ENCODE measurements at regions of chr2 and their contacts with region 1.

Region 1: GRCh38 chr2:25690058-25690457 is 16.7 kb upstream of the DTNB start:
- DNase-seq: peak; percentile 43 to 72
- H3K4me3 ChIP-seq: no peak overlapping the region
- H3K27ac ChIP-seq: no peak overlapping the region
- H3K4me1 ChIP-seq: peaks cover 12% of the 10 kb centered on the region
- H3K27me3 ChIP-seq: no peaks in the 10 kb centered on the region
- CTCF ChIP-seq: no peak

Region 2: DNA sequence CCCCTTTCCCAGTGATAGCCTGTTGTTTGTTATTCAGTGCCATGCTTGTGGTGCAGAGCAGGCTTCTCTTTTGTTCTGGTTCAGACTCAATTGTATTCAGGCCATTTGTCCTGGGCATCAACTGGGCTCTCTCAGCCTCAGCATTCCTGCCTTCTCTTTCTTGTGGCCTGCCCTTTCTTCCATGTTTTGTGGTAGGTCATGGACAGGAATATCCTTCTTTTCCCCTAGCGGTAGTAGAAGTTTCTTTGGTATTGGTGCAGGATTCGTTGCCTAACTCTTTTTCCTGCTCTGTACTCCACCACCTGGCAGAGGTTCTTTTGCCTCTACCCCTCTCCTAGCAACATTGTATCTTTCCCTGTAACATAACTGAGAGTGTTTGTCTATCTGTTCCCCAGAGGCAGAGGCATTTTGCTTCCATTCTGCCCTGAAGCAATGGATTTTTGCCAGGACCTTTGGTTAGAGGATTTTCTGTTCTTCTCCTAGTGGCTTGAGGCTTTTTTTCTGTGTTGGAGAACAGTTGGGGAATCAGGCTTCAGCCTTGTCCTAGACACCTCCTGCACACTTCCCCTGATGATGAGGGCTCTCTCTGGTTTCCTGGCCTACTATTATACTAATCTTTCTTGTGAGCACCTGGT is 1130.5 kb before region 1 on chr2:
- CTCF ChIA-PET with region 1: no interaction called
- POLR2A ChIA-PET with region 1: interaction called, 22 read pairs
- intact Hi-C with region 1: no loop called
- DNase-seq: no peak
- H3K4me3 ChIP-seq: no peak overlapping the region
- H3K27ac ChIP-seq: no peak overlapping the region
- H3K4me1 ChIP-seq: no peaks in the 10 kb centered on the region
- H3K27me3 ChIP-seq: no peaks in the 10 kb centered on the region
- CTCF ChIP-seq: no peak

Region 3: DNA sequence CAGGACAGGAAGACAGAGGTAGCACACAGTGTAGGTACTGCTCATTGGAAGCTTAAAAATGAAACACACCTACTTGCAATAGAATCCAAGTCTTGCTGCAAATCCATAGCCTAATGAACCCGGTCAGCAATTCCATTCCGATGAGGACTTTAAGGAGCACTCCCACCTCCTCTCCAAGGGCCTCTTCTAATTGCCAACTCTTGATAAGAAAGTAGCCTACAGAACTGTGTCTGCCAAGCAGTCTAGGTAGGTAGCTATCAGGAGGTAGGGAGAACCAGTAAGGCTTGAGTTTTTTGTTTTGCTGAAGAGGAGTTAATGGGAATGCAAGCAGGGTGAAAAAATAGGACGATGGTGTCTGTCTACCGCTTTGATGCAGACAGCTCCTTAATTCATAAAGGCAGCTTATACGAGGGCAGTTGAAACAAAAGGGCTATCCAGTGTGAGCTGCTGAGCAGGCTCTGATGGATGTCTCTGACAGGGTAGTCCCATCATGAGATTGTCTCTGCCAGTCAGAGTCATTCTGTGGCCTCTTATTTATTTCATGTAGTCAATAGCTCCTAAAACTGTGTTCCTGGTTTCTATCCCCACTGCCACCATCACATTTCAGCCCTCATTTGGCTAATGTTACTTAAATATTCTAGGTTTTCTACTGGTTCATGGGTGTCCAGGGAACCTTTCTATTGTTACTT is 192.7 kb before region 1 on chr2:
- CTCF ChIA-PET with region 1: no interaction called
- POLR2A ChIA-PET with region 1: interaction called, 14 read pairs
- intact Hi-C with region 1: no loop called
- DNase-seq: no peak
- H3K4me3 ChIP-seq: no peak overlapping the region
- H3K27ac ChIP-seq: no peak overlapping the region
- H3K4me1 ChIP-seq: peaks cover 7% of the 10 kb centered on the region
- H3K27me3 ChIP-seq: no peaks in the 10 kb centered on the region
- CTCF ChIP-seq: no peak

Region 4: GRCh38 chr2:25673300-25674076 is 16.6 kb before region 1 on chr2 and contains the start of gene DTNB:
- CTCF ChIA-PET with region 1: no interaction called
- POLR2A ChIA-PET with region 1: no interaction called
- intact Hi-C with region 1: loop called (anchors 2 kb)
- DNase-seq: peak; percentile 92 to 93
- H3K4me3 ChIP-seq: peak within 1 kb of the TSS; percentile 61
- H3K27ac ChIP-seq: peak within 1 kb of the TSS; percentile 48
- H3K4me1 ChIP-seq: peaks cover 33% of the 10 kb centered on the region
- H3K27me3 ChIP-seq: no peaks in the 10 kb centered on the region
- CTCF ChIP-seq: no peak
- total RNA-seq, gene DTNB: 51.9 TPM in 2 replicates

Region 5: GRCh38 chr2:25700221-25700660 is 10.2 kb after region 1 on chr2:
- CTCF ChIA-PET with region 1: interaction called, 5 read pairs
- POLR2A ChIA-PET with region 1: interaction called, 11 read pairs
- intact Hi-C with region 1: no loop called
- DNase-seq: peak; percentile 25 to 94
- H3K4me3 ChIP-seq: no peak overlapping the region
- H3K27ac ChIP-seq: no peak overlapping the region
- H3K4me1 ChIP-seq: peaks cover 34% of the 10 kb centered on the region
- H3K27me3 ChIP-seq: no peaks in the 10 kb centered on the region
- CTCF ChIP-seq: peak; percentile 88

Region 6: GRCh38 chr2:26345545-26346453 is 655.7 kb after region 1 on chr2 and contains the start of gene SELENOI:
- CTCF ChIA-PET with region 1: no interaction called
- POLR2A ChIA-PET with region 1: no interaction called
- intact Hi-C with region 1: no loop called
- DNase-seq: peak; percentile 98 to 99
- H3K4me3 ChIP-seq: peak within 1 kb of the TSS; percentile 85
- H3K27ac ChIP-seq: peak within 1 kb of the TSS; percentile 84
- H3K4me1 ChIP-seq: peaks cover 42% of the 10 kb centered on the region
- H3K27me3 ChIP-seq: no peaks in the 10 kb centered on the region
- CTCF ChIP-seq: no peak
- total RNA-seq, gene SELENOI: 33.0 and 60.8 TPM in 2 replicates

Measured in PC-9 (cell line).